Activated naive CD4-positive, alpha-beta T cell treated with anti-CD3 and anti-CD28 coated beads for 36 hours (primary cell): ENCODE measurements at regions of chr11 and their contacts with region 1.

Region 1: DNA sequence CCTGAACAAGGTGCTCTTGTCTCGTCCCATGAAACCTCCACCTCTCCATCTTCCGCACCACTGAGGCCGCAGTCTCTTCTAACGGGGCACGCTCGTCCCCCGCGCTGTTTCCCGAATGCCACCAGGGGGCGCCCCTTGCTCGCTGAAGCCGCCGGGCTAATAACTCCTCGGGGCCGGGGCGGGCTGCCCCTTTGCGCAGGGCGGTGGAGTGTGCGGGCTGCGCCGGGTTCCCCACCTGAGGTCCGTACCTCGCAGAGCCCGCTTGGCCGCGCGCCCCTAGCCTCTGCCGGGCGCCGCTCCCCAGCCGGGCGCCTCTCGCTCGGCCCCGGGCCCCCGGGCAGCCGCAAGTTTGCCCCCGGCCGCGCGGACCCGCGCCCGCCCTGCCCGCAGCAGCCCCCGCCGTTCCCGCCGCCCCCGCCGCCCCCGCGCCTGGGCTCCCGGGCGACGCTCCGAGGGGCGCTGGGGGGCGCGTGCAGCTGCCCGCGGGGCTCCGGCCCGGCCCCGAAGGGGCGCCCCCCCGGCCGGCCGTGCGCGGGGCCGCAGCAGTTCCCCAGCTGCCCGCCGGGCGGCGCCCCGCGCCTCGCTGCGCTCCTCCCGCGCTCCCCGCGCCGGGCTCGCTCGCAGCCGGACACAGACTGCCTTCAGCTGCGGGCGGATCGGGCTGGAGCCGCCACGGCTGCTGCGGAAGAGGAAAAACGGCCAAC is at the start of gene GRIK4:
- DNase-seq: peak; percentile 87
- H3K4me3 Mint-ChIP-seq: peak within 1 kb of the TSS; percentile 16
- H3K27ac Mint-ChIP-seq: no peak within 1 kb of the TSS
- H3K4me1 Mint-ChIP-seq: peaks cover 2% of the 10 kb centered on the region
- H3K27me3 Mint-ChIP-seq: peaks cover 66% of the 10 kb centered on the region
- total RNA-seq, gene GRIK4: not detected

Region 2: DNA sequence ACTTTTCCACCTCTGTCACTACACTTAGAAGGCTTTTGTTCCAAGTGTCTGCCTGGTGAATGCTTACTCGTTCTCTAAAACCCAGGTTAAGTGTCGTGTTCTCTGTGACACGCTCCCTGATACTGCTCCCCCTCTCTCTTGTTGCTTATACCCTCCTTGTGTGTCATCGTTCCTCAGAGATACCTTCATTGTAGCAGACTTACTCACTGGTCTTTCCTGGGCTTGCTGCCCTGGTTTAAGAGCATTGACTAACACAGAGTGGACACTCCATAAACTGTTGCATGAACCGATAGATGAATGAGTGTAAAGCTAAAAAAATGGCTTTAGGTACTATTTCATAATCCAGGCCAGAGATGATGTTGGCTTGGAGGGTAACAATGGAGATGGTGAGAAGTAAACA is 171.6 kb after region 1 on chr11:
- CTCF ChIA-PET with region 1: interaction called, 5 read pairs
- intact Hi-C with region 1: loop called (anchors 1 kb)
- DNase-seq: no peak
- H3K4me3 Mint-ChIP-seq: no peak overlapping the region
- H3K27ac Mint-ChIP-seq: no peak overlapping the region
- H3K4me1 Mint-ChIP-seq: no peaks in the 10 kb centered on the region
- H3K27me3 Mint-ChIP-seq: peaks cover 18% of the 10 kb centered on the region

Region 3: DNA sequence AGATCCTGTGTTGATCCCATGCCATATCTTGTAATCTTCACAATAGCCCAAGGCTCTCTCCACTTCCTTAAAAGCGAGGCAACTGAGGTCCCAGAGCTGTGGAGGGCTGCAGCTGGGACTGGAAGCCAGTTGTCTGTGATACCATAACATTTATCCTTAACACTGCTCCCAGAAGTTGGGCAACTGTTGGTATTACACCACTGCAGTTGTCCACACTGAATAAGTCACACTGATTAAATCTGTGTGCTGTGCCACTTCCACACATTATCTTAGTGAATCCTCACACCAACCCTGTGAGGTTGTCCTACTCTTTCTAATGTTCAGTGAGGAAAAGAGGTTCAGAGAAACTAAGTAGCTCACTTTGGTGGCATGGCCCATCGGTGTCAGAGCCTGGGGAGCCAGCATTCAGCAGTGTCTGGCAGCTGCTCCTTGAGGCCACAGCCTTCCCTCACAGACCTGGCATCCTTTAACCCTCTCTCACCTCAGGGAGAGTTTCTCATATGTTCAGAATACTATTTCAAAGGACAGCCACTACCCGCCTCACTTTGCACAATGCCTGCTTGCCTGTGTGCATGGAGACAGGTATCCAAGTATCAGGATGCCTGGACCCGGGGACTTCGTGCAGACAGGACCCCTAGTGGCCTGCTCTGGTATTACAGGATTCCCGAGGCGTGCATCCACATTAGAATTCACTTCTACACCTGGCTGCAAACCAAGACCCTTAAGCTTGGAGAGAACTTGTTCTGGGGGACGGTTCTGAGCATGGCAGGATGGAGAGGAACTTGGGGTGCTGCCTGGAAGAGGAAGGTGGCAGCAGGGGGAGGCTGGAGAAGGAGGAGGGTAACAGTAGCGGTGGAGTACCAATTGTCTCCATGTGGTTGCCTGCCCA is 290.8 kb after region 1 on chr11:
- CTCF ChIA-PET with region 1: interaction called, 3 read pairs
- intact Hi-C with region 1: loop called (anchors 1 kb)
- DNase-seq: peak; percentile 65
- H3K4me3 Mint-ChIP-seq: no peak overlapping the region
- H3K27ac Mint-ChIP-seq: no peak overlapping the region
- H3K4me1 Mint-ChIP-seq: no peaks in the 10 kb centered on the region
- H3K27me3 Mint-ChIP-seq: peaks cover 21% of the 10 kb centered on the region

Region 4: GRCh38 chr11:120929664-120930154 is 418.4 kb after region 1 on chr11:
- CTCF ChIA-PET with region 1: no interaction called
- intact Hi-C with region 1: loop called (anchors 1 kb)
- DNase-seq: peak; percentile 64
- H3K4me3 Mint-ChIP-seq: no peak overlapping the region
- H3K27ac Mint-ChIP-seq: no peak overlapping the region
- H3K4me1 Mint-ChIP-seq: no peaks in the 10 kb centered on the region
- H3K27me3 Mint-ChIP-seq: peaks cover 2% of the 10 kb centered on the region

Region 5: GRCh38 chr11:120952461-120953434 is 441.5 kb after region 1 on chr11:
- CTCF ChIA-PET with region 1: interaction called, 5 read pairs
- intact Hi-C with region 1: loop called (anchors 1 kb)
- DNase-seq: peak; percentile 84
- H3K4me3 Mint-ChIP-seq: peak overlapping the region; percentile 48
- H3K27ac Mint-ChIP-seq: peak overlapping the region; percentile 37
- H3K4me1 Mint-ChIP-seq: peaks cover 18% of the 10 kb centered on the region
- H3K27me3 Mint-ChIP-seq: peaks cover 19% of the 10 kb centered on the region

Region 6: DNA sequence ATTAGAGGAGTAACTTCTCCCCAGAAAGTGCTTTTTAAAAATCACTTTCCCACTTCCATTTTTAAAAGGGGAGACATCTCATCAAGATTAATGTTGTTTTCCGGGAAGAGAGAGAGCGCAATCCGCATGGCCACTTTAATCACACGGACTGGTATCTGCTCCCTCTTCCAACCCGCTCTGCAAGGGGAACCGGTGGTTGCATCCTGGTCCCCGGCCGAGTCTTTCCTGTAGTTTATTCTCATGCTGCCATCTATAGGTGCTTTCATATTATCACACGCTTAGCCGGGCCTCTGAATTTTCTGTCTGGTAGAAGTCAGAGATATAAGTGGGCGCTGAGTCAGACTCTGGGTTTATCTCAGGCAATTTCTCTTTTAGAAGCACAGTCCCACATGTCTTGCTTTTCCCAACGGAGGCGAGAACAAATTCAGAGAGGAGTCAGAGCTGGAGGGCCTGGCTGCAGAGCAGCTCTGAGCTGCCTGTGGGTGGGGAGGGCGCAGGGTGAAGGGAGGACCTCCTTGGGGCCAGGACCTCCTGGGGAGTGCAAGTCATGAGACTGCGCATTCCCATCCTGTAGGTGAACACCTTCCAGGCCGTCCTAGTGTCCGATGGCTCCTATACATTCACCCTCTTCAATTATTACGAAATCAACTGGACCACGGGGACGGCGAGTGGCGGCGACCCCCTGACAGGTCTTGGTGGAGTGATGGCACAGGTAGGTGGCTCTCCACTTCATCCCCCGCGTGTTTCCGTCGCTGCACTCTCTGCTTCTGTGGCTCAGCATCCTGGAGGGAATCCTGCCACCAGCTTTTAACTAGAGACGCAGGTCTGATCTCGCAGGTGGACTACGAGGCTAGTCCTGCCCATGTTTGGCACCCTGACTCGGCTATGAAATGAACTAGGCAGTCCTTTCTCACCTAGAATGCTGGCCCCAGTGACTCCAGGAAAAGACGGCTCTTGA is 601.5 kb after region 1 on chr11:
- CTCF ChIA-PET with region 1: no interaction called
- intact Hi-C with region 1: loop called (anchors 2 kb)
- DNase-seq: peak; percentile 64
- H3K4me3 Mint-ChIP-seq: no peak overlapping the region
- H3K27ac Mint-ChIP-seq: no peak overlapping the region
- H3K4me1 Mint-ChIP-seq: no peaks in the 10 kb centered on the region
- H3K27me3 Mint-ChIP-seq: peaks cover 12% of the 10 kb centered on the region

Region 7: GRCh38 chr11:121194731-121195596 is 683.7 kb after region 1 on chr11:
- CTCF ChIA-PET with region 1: interaction called, 5 read pairs
- intact Hi-C with region 1: loop called (anchors 1 kb)
- DNase-seq: peak; percentile 78
- H3K4me3 Mint-ChIP-seq: no peak overlapping the region
- H3K27ac Mint-ChIP-seq: no peak overlapping the region
- H3K4me1 Mint-ChIP-seq: no peaks in the 10 kb centered on the region
- H3K27me3 Mint-ChIP-seq: peaks cover 11% of the 10 kb centered on the region